ENCODE measurements at regions of chr6 and their contacts with region 1.

Region 1: GRCh38 chr6:83514866-83515466 is 2.6 kb downstream of the PRSS35 start:
- DNase-seq: peak; percentile 85
- ATAC-seq: peak; percentile 34
- H3K4me3 ChIP-seq: no peak overlapping the region
- H3K27ac ChIP-seq: no peak overlapping the region
- H3K4me1 ChIP-seq: peaks cover 14% of the 10 kb centered on the region
- H3K27me3 ChIP-seq: no peaks in the 10 kb centered on the region
- CTCF ChIP-seq: peak; percentile 86

Region 2: DNA sequence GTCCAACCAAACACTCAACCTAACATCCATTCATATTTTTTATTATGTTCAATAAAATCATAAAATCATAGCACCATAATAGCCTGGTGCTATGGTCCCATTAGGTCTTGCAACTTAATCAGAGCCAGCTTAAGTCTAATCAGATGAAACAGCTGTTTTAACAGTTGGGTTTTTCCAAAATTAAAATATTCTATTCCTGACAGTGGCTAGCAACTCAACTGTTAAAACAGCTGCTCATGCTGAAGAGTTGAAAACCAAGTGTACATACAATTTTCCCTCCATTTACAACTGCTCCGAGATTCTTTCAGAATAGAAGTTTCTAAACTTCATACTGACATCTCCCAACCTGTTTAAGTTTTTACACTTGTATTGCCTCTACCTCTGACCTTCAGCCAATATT is 538.8 kb before region 1 on chr6:
- CTCF ChIA-PET with region 1: no interaction called
- POLR2A ChIA-PET with region 1: no interaction called
- intact Hi-C with region 1: no loop called
- DNase-seq: no peak
- ATAC-seq: no peak
- H3K4me3 ChIP-seq: no peak overlapping the region
- H3K27ac ChIP-seq: no peak overlapping the region
- H3K4me1 ChIP-seq: peaks cover 35% of the 10 kb centered on the region
- H3K27me3 ChIP-seq: no peaks in the 10 kb centered on the region
- CTCF ChIP-seq: no peak

Region 3: GRCh38 chr6:83221889-83222479 is 293.0 kb before region 1 on chr6:
- CTCF ChIA-PET with region 1: interaction called, 3 read pairs
- POLR2A ChIA-PET with region 1: no interaction called
- intact Hi-C with region 1: loop called (anchors 1 kb)
- DNase-seq: peak; percentile 57
- ATAC-seq: no peak
- H3K4me3 ChIP-seq: no peak overlapping the region
- H3K27ac ChIP-seq: no peak overlapping the region
- H3K4me1 ChIP-seq: peaks cover 4% of the 10 kb centered on the region
- H3K27me3 ChIP-seq: no peaks in the 10 kb centered on the region
- CTCF ChIP-seq: peak; percentile 69

Region 4: GRCh38 chr6:83417880-83418663 is 96.9 kb before region 1 on chr6:
- CTCF ChIA-PET with region 1: interaction called, 19 read pairs
- POLR2A ChIA-PET with region 1: interaction called, 4 read pairs
- intact Hi-C with region 1: loop called (anchors 1 kb)
- DNase-seq: peak; percentile 67
- ATAC-seq: peak; percentile 78
- H3K4me3 ChIP-seq: no peak overlapping the region
- H3K27ac ChIP-seq: no peak overlapping the region
- H3K4me1 ChIP-seq: no peaks in the 10 kb centered on the region
- H3K27me3 ChIP-seq: no peaks in the 10 kb centered on the region
- CTCF ChIP-seq: peak; percentile 71

Region 5: DNA sequence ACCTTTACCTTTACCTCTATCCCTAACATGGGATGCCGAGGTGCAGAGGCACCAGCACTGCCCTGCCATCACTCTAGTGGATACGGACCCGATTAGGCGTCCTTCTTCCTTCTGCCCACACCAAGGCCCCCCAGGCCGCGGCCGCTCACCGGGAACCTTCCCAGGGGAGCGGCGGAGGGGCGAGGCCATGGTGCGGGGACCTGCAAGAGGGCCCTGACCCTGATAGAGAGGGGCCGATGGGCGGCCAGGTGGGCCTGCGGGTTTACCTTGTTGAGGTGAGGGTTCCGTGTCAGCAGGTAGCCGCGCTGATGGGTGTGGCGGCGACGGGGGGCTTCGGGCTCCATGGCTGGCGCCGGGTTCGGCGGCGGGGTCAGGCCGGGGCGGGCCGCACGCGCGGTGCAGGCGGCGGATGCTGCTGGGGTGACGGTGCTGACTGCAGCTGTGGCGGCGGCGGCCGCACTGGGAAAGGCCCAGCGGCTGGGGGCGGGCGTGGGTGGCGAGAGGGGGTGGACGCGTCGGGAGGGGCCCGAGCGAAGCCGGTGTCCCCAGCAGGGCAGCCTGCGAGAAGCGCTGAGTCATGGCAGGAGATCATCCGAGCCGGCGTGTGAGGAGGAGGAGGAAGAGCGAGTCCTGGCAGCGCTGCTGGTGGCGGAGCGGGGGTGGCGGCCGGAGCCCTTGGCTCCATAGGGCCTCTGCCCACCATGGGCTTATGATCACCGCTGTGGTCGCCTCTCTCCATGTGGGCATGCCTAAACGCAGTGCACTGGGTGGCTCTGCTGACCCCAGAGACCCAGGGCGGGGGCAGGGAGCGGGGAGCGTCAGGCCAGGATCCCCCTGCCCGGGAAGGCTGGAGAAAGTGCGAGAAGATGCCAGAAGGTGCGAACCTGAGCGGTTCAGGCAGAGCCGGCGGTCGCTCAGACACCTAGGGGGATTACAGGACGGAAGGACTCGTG is 84.1 kb before region 1 on chr6 and contains the start of gene ME1:
- CTCF ChIA-PET with region 1: no interaction called
- POLR2A ChIA-PET with region 1: no interaction called
- intact Hi-C with region 1: loop called (anchors 5 kb)
- DNase-seq: peak; percentile 88
- ATAC-seq: peak; percentile 71
- H3K4me3 ChIP-seq: peak within 1 kb of the TSS; percentile 92
- H3K27ac ChIP-seq: peak within 1 kb of the TSS; percentile 89
- H3K4me1 ChIP-seq: peaks cover 58% of the 10 kb centered on the region
- H3K27me3 ChIP-seq: no peaks in the 10 kb centered on the region
- CTCF ChIP-seq: no peak
- total RNA-seq, gene ME1: 22.3 and 28.0 TPM in 2 replicates

Region 6: DNA sequence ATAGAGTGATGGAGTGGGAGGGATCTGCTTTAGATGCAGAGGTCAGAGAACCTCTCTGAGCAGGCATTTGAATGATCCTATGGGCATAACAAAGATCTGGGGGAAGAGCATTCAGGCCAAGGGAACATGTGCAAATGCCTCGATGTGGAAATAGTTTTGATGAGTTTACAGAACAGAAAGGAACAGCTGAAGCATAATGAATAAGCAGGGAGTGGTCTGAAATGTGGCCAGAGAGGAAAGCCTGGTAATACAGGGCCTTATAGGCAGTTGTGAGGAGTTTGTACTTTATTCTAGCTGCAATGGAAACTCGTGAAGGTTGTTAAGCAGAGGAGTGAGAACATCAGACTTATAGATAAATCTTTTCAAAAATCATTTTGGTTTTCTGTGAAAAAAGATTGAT is 51.1 kb before region 1 on chr6:
- CTCF ChIA-PET with region 1: no interaction called
- POLR2A ChIA-PET with region 1: no interaction called
- intact Hi-C with region 1: loop called (anchors 2 kb)
- DNase-seq: peak; percentile 81
- ATAC-seq: peak; percentile 46
- H3K4me3 ChIP-seq: peak overlapping the region; percentile 33; the same call in 1 of the 2 replicates
- H3K27ac ChIP-seq: peak overlapping the region; percentile 93
- H3K4me1 ChIP-seq: peaks cover 51% of the 10 kb centered on the region
- H3K27me3 ChIP-seq: no peaks in the 10 kb centered on the region
- CTCF ChIP-seq: no peak